ENCODE measurements at regions of chr6 and their contacts with region 1.

Region 1: DNA sequence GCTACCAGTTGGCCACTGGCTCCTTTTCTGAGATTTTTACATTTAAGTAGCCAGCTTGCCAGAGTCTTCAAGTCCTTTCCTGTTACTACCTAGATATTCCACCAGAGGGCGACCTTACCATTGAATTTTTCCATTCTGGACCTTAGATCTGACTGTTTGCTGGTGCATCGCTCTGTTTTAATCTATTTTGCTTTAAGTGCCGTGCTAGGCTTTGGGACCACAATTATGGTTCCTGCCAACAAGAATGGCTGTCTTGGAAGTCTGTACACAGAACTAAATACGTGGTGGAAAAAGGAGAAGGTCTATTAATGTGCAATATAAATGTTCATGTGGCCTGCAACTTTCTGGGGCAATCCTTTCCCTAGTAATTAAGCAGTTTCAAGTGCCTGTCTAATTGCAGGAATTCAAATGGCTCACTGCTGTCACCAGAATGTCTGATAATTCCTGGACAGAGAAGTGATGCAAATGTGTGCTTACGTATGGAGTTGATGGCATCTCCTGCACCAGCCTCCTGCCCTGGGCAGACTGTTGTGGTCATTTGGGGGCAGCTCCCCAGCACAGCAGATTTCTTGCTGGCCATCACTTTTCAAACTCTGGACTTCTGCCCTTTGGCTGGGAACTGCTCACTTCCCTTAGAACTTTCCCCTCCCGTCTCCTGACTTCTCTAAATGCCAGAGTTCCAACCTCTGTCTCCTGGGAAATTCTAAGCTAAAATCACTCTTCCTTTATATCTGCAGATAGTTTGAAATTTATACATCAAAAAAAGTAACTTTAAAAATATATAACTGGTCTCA is 5.6 kb upstream of the HLA-DOA start:
- DNase-seq: peak in 7 of 9 experiments; percentile 43 to 89 (median 56)
- ATAC-seq: peak; percentile 74
- H3K4me3 ChIP-seq: no peak overlapping the region
- H3K4me3 Mint-ChIP-seq: no peak overlapping the region
- H3K27ac ChIP-seq: no peak overlapping the region
- H3K27ac Mint-ChIP-seq: no peak overlapping the region
- H3K4me1 ChIP-seq: peaks cover 23% of the 10 kb centered on the region
- H3K4me1 Mint-ChIP-seq: peaks cover 35% of the 10 kb centered on the region
- H3K27me3 ChIP-seq: no peaks in the 10 kb centered on the region
- H3K27me3 Mint-ChIP-seq: no peaks in the 10 kb centered on the region
- CTCF ChIP-seq: peak; percentile 87

Region 2: DNA sequence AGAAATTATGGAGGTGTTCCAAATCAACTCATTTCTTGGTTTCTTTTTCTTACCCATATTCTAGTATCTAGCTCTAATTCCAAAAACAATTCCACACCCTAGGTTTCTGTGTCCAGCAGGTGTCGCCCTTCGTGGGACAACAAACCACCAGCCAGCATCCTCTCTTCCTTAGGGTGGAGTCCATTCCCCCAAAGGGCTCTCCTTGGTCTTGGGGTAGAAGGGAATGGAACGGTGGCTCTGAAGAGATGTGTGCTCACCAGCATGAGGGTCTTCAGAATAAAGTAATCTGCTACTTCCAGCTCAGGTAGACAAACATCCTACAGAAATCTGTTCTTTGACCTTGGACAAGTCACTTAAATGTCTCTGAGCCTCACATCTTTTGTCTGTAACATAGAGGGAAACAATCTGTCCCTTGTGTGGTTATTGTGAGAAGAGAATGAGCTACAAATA is 81.4 kb before region 1 on chr6:
- CTCF ChIA-PET with region 1: interaction called, 10 read pairs
- POLR2A ChIA-PET with region 1: no interaction called
- intact Hi-C with region 1: no loop called
- DNase-seq: peak; percentile 50 to 87 (median 81)
- ATAC-seq: peak; percentile 61
- H3K4me3 ChIP-seq: no peak overlapping the region
- H3K4me3 Mint-ChIP-seq: no peak overlapping the region
- H3K27ac ChIP-seq: no peak overlapping the region
- H3K27ac Mint-ChIP-seq: no peak overlapping the region
- H3K4me1 ChIP-seq: no peaks in the 10 kb centered on the region
- H3K4me1 Mint-ChIP-seq: peaks cover 5% of the 10 kb centered on the region
- H3K27me3 ChIP-seq: no peaks in the 10 kb centered on the region
- H3K27me3 Mint-ChIP-seq: no peaks in the 10 kb centered on the region
- CTCF ChIP-seq: peak; percentile 72

Region 3: GRCh38 chr6:33049323-33050013 is 34.4 kb after region 1 on chr6:
- CTCF ChIA-PET with region 1: interaction called, 24 read pairs
- POLR2A ChIA-PET with region 1: no interaction called
- intact Hi-C with region 1: loop called in 1 of 2 experiments (anchors 1 kb)
- DNase-seq: peak in 2 of 9 experiments; percentile 14 to 25
- ATAC-seq: no peak
- H3K4me3 ChIP-seq: no peak overlapping the region
- H3K4me3 Mint-ChIP-seq: no peak overlapping the region
- H3K27ac ChIP-seq: no peak overlapping the region
- H3K27ac Mint-ChIP-seq: no peak overlapping the region
- H3K4me1 ChIP-seq: no peaks in the 10 kb centered on the region
- H3K4me1 Mint-ChIP-seq: no peaks in the 10 kb centered on the region
- H3K27me3 ChIP-seq: peaks cover 0 to 5% of the 10 kb centered on the region in 2 experiments
- H3K27me3 Mint-ChIP-seq: peaks cover 42% of the 10 kb centered on the region
- CTCF ChIP-seq: no peak

Region 4: DNA sequence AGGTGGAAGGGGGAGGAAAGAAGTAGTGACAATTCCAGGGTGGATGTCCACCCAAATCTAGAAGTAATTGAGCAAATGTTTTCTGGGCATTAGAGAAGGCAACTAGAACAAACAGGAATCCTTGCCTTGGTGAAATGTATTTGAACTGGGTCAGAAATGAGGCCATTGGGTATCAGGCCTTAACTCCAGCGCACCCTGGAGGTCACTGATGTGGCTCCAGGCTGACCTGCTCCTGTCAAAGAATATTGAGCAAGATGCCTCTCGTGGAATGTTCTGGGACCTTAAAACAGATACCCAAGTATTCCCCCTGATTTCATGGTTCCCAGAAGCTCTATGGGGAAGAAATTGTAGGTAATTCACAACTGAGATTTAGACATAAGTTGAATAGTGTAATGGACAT is 67.7 kb after region 1 on chr6:
- CTCF ChIA-PET with region 1: interaction called, 26 read pairs
- POLR2A ChIA-PET with region 1: interaction called, 3 read pairs
- intact Hi-C with region 1: loop called (anchors 2 to 5 kb)
- DNase-seq: peak in 2 of 9 experiments; percentile 27 to 44
- ATAC-seq: no peak
- H3K4me3 ChIP-seq: no peak overlapping the region
- H3K4me3 Mint-ChIP-seq: no peak overlapping the region
- H3K27ac ChIP-seq: no peak overlapping the region
- H3K27ac Mint-ChIP-seq: peak overlapping the region; percentile 35
- H3K4me1 ChIP-seq: peaks cover 11% of the 10 kb centered on the region
- H3K4me1 Mint-ChIP-seq: peaks cover 42% of the 10 kb centered on the region
- H3K27me3 ChIP-seq: no peaks in the 10 kb centered on the region
- H3K27me3 Mint-ChIP-seq: no peaks in the 10 kb centered on the region
- CTCF ChIP-seq: no peak

Region 5: DNA sequence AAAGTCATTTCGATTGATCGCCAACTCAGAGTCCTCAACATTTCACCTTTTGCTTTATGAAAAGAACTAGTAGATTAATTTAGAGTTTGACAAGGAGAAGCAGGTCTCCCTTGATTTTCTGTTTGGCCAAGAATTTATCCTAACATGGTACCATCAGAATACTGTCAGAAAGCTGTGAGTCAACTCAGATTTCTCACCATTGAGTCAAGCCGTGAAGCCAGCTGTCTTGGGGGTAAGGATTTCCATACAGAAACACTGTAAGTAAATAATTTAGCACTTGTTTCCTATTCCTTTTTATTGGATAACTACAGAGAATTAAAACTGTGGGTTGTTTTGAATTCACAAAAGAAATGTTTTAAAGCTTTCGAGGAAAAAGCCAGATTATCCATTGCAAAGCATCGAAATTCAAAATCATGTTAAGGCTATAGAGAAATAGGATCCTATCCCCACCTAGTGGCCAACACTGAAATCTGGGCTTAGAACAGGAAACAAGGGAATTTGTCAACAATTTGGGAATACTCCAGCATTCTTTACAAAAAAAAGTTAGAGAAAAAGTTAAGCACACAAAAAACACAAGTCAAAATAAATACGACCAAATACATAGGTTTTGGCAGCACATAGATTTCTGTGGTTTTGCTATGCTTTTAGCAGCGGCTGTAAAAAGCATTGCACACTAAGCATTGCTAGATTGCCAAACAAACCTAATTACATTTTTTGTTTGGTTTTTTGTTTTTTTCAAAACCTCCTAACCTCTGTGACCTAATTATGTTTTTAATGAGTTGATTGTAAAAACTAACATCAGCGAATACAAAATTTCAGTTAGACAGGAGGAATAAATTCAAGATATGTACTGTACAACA is 133.0 kb after region 1 on chr6:
- CTCF ChIA-PET with region 1: interaction called, 27 read pairs
- POLR2A ChIA-PET with region 1: interaction called, 3 read pairs
- intact Hi-C with region 1: loop called (anchors 1 to 2 kb)
- DNase-seq: peak in 2 of 9 experiments; percentile 42 to 52
- ATAC-seq: no peak
- H3K4me3 ChIP-seq: no peak overlapping the region
- H3K4me3 Mint-ChIP-seq: no peak overlapping the region
- H3K27ac ChIP-seq: no peak overlapping the region
- H3K27ac Mint-ChIP-seq: no peak overlapping the region
- H3K4me1 ChIP-seq: no peaks in the 10 kb centered on the region
- H3K4me1 Mint-ChIP-seq: peaks cover 2% of the 10 kb centered on the region
- H3K27me3 ChIP-seq: no peaks in the 10 kb centered on the region
- H3K27me3 Mint-ChIP-seq: peaks cover 18% of the 10 kb centered on the region
- CTCF ChIP-seq: peak; percentile 71

Region 6: DNA sequence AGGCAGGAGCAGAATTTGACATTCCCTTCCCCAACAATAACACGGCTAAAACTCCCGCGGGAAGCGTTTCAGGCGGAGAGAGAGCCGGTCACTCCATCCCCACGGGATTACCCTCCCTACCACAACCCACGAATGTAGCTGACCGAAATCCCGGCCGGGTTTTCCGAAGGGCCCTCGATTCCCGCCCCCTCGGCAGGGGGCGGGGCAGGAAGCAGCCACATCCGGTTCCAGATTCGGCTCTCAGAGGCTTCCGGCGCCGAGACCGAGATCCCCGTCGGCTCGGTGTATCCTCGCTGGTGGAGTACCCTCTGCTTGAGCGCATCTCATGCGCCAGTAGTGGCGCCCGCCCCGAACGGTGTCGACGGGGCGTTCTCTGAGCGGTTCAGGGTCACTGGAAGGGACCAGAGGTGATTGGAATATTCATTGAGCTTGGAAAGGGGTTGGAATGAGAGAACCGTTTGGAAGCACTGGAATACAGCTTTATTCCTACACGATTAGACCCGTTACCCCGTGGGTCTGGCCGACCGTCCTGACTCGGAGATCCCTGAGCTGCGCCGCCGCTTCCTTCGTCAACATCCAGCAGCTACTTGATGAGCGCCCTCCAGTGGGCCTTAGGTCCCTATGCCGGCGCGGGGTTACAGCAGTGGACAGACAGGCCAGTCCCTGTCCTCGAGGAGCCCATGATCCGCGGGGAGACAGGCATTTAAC is 284.4 kb after region 1 on chr6:
- CTCF ChIA-PET with region 1: no interaction called
- POLR2A ChIA-PET with region 1: no interaction called
- intact Hi-C with region 1: no loop called
- DNase-seq: peak; percentile 82 to 97 (median 94)
- ATAC-seq: peak; percentile 83
- H3K4me3 ChIP-seq: peak overlapping the region; percentile 88 to 91
- H3K4me3 Mint-ChIP-seq: peak overlapping the region; percentile 99
- H3K27ac ChIP-seq: peak overlapping the region; percentile 83 to 96
- H3K27ac Mint-ChIP-seq: peak overlapping the region; percentile 99
- H3K4me1 ChIP-seq: peaks cover 14% of the 10 kb centered on the region
- H3K4me1 Mint-ChIP-seq: peaks cover 41% of the 10 kb centered on the region
- H3K27me3 ChIP-seq: no peaks in the 10 kb centered on the region
- H3K27me3 Mint-ChIP-seq: no peaks in the 10 kb centered on the region
- CTCF ChIP-seq: peak; percentile 70